ENCODE measurements at regions of chr3 and their contacts with region 1.

Region 1: DNA sequence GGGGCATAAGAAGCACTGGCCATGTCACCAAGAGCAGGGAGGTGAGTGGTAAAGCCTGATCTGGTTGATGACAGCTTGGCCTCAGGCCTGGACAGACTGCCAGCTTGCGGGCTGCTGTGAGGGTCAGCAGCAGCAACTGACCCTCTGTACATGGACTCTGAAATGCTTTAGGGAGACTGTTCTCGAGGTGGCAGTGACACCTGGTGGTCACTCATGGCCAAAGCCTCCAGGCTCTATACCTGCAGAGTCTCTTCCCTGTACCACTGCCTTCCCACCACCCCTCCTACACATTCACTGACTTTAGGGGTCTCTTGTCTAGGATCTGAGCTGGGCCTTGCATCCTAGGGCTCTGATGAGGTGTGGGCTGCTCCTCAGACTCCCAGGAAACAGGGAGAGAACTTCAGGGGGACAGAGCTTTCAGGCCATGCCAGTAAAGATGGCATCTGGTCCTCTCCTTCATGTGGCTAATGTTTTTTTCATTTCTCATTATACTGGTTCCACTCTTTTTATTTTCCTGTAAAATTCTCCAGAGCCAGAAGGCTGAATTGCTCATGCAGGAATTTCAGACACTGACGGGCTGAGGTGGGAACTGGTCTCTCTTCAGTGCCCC is 17.2 kb upstream of the TIMP4 start:
- DNase-seq: peak; percentile 64 to 84
- ATAC-seq: peak; percentile 89 to 94 (median 90)
- H3K4me3 ChIP-seq: no peak overlapping the region
- H3K27ac ChIP-seq: no peak overlapping the region
- H3K4me1 ChIP-seq: peaks cover 15% of the 10 kb centered on the region
- H3K27me3 ChIP-seq: no peaks in the 10 kb centered on the region
- CTCF ChIP-seq: peak; percentile 92

Region 2: DNA sequence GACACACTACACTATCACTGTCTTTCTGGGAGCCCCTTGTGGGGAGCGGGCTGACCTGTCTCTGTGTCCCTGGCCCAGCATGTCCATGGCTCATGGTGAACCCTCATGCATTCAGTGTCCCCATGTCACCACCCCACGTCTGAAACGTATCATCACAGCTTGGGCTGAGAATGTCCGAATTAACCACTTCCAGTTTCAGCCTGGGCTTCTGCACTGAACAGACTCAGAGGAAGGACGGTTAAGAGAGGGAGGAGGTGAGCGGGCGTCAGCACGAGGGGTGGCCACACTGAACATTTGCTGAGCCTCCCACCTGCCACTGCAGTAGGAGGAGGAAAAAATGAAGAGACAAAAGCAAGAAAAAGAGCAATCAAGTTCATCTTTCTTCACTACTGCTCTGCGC is 1701.1 kb before region 1 on chr3:
- intact Hi-C with region 1: no loop called
- DNase-seq: no peak
- ATAC-seq: peak in 1 of 4 donors; percentile 11
- H3K4me3 ChIP-seq: no peak overlapping the region
- H3K27ac ChIP-seq: peak overlapping the region; percentile 78
- H3K4me1 ChIP-seq: peaks cover 27% of the 10 kb centered on the region
- H3K27me3 ChIP-seq: no peaks in the 10 kb centered on the region
- CTCF ChIP-seq: no peak

Region 3: DNA sequence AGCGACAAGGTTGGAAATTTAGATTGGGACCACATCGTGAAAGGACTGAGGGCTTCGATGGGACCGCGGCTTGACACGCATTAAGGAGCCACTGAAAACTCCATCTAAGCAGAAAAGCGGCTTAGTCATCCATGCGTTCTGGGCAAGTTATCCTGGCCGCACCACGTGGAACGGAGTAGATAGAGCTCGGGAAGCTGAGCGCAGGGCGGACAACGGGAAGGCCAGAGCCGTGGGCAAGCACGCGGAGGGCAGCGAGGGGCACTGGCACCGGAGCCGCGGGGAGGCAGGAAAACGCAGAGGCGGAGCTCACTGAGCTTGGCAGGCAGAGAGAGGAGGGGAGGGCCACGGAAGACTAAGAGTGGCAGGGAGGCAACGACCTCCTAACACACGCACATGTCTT is 470.9 kb before region 1 on chr3:
- intact Hi-C with region 1: no loop called
- DNase-seq: no peak
- ATAC-seq: no peak
- H3K4me3 ChIP-seq: no peak overlapping the region
- H3K27ac ChIP-seq: no peak overlapping the region
- H3K4me1 ChIP-seq: no peaks in the 10 kb centered on the region
- H3K27me3 ChIP-seq: no peaks in the 10 kb centered on the region
- CTCF ChIP-seq: no peak

Region 4: GRCh38 chr3:12135029-12135657 is 40.8 kb before region 1 on chr3:
- intact Hi-C with region 1: loop called (anchors 1 to 2 kb)
- DNase-seq: peak; percentile 72 to 82
- ATAC-seq: peak; percentile 83 to 89 (median 85)
- H3K4me3 ChIP-seq: no peak overlapping the region
- H3K27ac ChIP-seq: no peak overlapping the region
- H3K4me1 ChIP-seq: peaks cover 20% of the 10 kb centered on the region
- H3K27me3 ChIP-seq: no peaks in the 10 kb centered on the region
- CTCF ChIP-seq: peak; percentile 95

Region 5: GRCh38 chr3:12273045-12273695 is 97.2 kb after region 1 on chr3:
- intact Hi-C with region 1: no loop called
- DNase-seq: no peak
- ATAC-seq: no peak
- H3K4me3 ChIP-seq: no peak overlapping the region
- H3K27ac ChIP-seq: no peak overlapping the region
- H3K4me1 ChIP-seq: no peaks in the 10 kb centered on the region
- H3K27me3 ChIP-seq: no peaks in the 10 kb centered on the region
- CTCF ChIP-seq: no peak

Region 6: GRCh38 chr3:12479919-12480425 is 304.0 kb after region 1 on chr3:
- intact Hi-C with region 1: loop called (anchors 2 to 5 kb)
- DNase-seq: no peak
- ATAC-seq: peak in 2 of 4 donors; percentile 26
- H3K4me3 ChIP-seq: no peak overlapping the region
- H3K27ac ChIP-seq: no peak overlapping the region
- H3K4me1 ChIP-seq: peaks cover 8% of the 10 kb centered on the region
- H3K27me3 ChIP-seq: no peaks in the 10 kb centered on the region
- CTCF ChIP-seq: peak; percentile 76